ENCODE measurements at regions of chr2 and their contacts with region 1.

Region 1: DNA sequence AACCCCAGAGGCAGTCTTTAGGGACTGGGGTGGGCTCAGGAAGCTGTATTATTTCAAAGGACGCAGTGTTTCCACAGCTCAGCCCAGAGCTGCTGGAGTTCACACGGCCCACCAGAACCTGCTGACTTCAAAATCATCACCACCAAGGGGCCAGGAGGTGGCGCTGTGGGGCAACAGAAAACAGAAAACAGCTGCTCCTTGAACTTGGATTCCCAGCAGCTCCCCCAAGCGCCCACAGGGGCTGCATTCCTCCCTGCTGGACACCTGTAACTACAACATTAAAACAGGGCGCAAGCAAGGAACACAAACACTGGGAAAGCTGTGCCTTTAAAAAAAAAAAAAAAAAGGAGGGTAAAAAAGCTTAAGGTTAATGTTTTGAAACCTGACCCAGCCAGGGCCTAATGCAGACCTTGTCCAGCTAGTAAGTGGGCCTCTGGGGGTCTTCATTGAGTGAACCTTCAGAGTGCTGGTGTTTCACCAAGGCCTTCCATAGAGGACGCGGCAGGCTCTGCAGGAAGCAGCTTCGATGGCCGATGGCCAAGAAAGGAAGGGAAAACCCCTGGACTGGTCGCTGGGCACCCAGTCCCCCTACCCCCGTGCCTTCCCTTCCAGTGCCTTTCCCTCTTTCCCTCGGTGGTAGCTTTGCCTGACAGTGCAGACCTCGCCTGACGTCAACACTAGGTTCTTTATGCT is 25.9 kb downstream of the MLPH start:
- DNase-seq: peak; percentile 78
- H3K4me3 Mint-ChIP-seq: no peak overlapping the region
- H3K27ac Mint-ChIP-seq: no peak overlapping the region
- H3K4me1 Mint-ChIP-seq: no peaks in the 10 kb centered on the region
- H3K27me3 Mint-ChIP-seq: peaks cover 16% of the 10 kb centered on the region

Region 2: DNA sequence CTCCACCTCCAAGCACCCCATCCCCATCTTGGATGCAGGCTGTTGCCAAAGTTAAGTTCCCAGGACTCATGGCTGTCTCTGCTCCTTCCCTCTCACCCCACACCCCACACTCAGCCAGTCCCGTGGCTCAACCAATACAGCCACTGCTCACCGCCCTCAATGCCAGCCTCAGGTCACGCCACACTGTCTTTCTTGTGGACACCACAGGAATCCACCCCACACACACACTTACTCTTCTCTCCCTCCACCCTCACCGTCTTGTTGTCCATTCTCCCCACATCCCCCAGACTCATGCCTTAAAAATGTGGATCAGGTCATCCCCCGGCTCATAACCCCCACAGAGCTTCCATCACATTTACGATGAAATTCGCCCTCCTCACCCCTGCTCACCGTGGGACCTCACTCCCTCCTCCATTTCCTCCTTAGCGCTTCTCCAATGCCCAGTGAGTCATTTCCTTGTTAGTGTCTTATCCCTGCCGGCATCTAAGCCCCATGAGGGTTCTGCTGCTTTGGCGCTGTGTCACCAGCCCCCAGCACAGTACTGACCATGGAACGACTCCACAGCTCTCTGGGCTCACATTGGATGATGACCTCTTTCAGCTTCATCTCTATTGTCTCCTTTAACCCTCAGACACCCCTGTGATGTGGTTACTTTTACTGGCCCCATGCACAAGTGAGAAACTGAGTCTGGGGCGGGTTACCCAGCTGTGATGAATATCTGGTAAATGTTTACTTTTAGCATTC is 12.1 kb before region 1 on chr2:
- CTCF ChIA-PET with region 1: interaction called, 11 read pairs
- POLR2A ChIA-PET with region 1: no interaction called
- DNase-seq: no peak
- H3K4me3 Mint-ChIP-seq: no peak overlapping the region
- H3K27ac Mint-ChIP-seq: no peak overlapping the region
- H3K4me1 Mint-ChIP-seq: peaks cover 6% of the 10 kb centered on the region
- H3K27me3 Mint-ChIP-seq: peaks cover 33% of the 10 kb centered on the region

Region 3: DNA sequence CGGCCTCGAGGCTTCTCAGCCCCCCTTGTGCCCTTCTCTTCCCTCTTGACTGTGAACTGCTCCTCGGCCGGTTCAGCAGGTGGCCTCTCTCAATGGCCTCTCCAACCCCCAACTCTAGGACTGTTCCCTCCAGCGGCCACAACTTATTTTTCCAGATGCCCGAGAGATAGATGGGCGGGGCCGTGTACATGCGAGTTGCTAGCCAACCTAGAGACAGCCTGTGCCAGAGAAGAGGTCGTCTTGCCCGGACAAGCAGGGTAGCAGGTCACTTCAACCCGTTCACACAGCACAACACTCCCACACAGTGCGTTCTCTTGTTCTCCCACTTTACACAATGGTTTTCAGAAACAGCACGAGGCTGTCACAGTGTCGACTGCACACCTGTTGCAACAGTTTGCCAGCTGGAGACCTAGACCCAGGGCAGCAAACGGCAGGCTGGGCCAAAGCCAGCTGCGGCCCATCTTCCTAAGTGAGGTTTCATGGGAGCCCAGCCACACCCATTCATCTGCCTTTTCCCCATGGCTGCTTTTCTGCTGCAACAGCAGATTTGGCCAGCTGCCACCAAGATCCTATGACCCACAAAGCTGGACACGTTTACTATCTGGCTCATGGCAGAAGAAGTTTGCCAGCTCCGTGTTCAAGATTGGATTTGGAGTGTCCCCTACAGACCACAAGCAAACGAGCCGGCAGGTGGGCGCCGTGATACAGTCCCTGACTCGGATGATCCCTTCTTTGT is 46.2 kb after region 1 on chr2:
- CTCF ChIA-PET with region 1: interaction called, 12 read pairs
- POLR2A ChIA-PET with region 1: no interaction called
- DNase-seq: no peak
- H3K4me3 Mint-ChIP-seq: no peak overlapping the region
- H3K27ac Mint-ChIP-seq: no peak overlapping the region
- H3K4me1 Mint-ChIP-seq: peaks cover 12% of the 10 kb centered on the region
- H3K27me3 Mint-ChIP-seq: peaks cover 43% of the 10 kb centered on the region

Region 4: DNA sequence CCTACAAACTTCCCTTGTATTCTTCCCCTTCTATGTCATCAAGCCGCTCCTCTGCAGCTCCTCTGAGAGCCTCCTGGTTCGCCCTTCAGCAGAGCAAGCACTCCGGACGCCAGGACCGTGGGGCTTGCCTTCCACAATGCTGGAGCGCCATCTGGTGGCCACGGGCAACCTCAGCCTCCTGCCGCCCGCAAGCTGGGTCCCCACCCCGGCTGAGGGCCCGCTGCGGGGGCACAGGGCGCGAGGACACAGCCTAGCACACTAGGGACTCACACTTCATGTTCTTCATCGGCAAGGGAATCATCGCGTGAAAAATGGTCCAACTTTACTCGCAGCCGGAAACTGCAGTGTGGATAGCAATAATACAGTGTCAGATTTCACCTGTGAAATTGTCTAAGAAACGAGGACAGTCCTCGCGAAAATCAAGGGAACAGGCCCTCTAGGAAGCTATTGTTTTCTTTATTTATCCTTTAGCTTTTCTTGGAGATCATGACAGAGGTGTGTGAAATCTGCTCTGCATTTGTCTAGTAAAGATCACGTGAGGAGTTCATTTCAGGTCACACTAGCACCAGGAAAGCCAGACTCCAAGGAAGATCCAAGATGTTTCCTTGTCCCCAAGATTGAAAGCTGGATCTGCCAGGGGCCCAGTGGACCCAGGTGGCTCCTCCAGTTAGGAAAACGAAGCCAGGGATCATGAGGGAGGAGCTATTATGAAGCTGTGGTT is 59.3 kb after region 1 on chr2:
- CTCF ChIA-PET with region 1: interaction called, 186 read pairs
- POLR2A ChIA-PET with region 1: interaction called, 9 read pairs
- DNase-seq: peak; percentile 84
- H3K4me3 Mint-ChIP-seq: no peak overlapping the region
- H3K27ac Mint-ChIP-seq: no peak overlapping the region
- H3K4me1 Mint-ChIP-seq: no peaks in the 10 kb centered on the region
- H3K27me3 Mint-ChIP-seq: peaks cover 6% of the 10 kb centered on the region

Region 5: DNA sequence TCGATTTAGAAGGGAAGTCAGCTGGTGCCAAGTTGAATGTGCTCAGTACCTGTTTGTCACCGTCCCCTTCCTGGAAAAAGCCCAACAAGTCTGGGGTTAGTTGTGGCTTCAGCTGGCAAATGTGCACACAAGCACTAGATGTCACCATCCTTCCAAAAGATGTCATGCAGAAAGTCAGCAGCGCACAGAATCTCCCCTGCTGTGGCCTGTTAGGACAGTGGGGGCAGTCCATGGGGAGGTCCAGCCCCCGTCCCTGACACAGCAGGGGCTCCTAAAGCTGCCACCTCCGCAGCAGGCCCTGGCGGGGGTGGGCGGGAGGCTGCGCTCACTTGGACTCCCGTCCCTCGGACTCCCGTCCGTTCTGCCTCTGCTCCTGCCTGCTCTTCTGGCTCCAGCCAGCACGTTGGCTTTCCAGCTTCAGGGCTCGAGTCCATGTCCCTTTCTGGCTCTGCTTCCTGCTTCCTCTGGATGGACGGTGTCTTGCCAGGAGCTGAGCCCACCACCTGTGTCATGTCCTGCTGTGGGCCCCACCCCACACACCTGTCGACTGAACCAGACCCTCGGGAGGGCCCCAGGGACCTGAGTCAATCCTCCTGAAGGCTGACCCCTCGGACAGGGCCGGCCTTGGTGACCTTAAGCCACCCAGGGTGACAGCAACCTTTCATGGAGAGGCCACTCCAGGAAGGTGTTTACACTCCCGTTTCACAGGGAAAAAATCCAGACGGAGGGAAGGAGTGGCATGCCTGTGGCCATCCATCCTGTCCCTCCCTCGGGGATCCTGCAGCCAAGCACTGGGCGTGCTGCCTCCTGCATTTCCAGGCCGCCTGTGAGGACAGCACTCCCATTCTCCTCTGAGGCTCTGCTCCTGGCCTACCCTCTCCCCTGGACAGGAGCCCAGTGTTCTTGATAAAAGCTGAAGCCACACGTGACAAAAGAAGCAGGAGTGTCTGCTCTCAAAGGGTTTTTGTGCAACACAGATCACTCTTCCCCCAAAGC is 69.1 kb after region 1 on chr2:
- CTCF ChIA-PET with region 1: interaction called, 12 read pairs
- POLR2A ChIA-PET with region 1: no interaction called
- DNase-seq: peak; percentile 62
- H3K4me3 Mint-ChIP-seq: no peak overlapping the region
- H3K27ac Mint-ChIP-seq: no peak overlapping the region
- H3K4me1 Mint-ChIP-seq: peaks cover 5% of the 10 kb centered on the region
- H3K27me3 Mint-ChIP-seq: peaks cover 3% of the 10 kb centered on the region

Region 6: GRCh38 chr2:237744613-237745249 is 231.8 kb after region 1 on chr2:
- CTCF ChIA-PET with region 1: interaction called, 16 read pairs
- POLR2A ChIA-PET with region 1: no interaction called
- DNase-seq: peak; percentile 75
- H3K4me3 Mint-ChIP-seq: no peak overlapping the region
- H3K27ac Mint-ChIP-seq: peak overlapping the region; percentile 64
- H3K4me1 Mint-ChIP-seq: peaks cover 29% of the 10 kb centered on the region
- H3K27me3 Mint-ChIP-seq: no peaks in the 10 kb centered on the region

Measured in activated CD4-positive, alpha-beta memory T cell treated with anti-CD3 and anti-CD28 coated beads, Interleukin-2, amount 10 ng/mL, durations not matched to agents 7 days and 5 days (primary cell).